GM12878 (cell line): ENCODE measurements at regions of chr11 and their contacts with region 1.

Region 1: DNA sequence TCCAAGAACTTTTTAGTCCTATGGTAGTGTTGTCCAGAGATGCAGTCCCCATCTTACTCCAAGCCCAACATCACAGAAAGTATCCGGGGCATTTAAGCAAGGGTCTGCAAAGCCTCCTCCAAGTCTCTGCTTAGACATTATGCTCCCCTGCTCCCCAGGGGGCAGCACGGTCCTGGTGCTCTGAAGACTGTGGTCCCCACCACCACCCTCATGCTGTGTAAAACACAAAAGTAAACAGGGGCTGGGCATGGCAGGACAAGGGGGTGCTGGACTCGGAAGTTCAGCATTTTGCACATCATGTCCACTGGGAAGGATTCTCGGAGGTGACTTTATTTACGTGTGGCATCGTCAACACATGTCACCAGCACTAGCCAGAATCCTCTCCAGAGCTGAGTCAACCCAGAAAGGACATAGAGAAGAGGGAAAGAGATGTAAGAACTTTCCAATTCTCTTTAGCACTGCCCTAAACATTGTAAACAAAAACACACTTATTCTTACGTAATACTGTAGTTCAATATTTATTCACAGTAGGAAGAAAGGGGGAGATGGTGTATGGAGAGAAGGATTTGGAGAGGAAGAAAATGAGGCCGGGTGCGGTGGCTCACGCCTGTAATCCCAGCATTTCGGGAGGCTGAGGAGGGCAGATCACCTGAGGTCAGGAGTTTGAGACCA is 37.7 kb downstream of the TCIRG1 start:
- DNase-seq: no peak
- ATAC-seq: 0 out of 3 replicates have a peak, but pooled peaks have one; percentile 21
- H3K4me3 ChIP-seq: no peak overlapping the region
- H3K27ac ChIP-seq: no peak overlapping the region
- H3K4me1 ChIP-seq: peaks cover 3% of the 10 kb centered on the region; the same call in 1 of the 2 replicates
- H3K27me3 ChIP-seq: no peaks in the 10 kb centered on the region
- CTCF ChIP-seq: peak; percentile 18 to 31 (median 27); a peak in 4 of 6 replicates
- EP300 ChIP-seq: no peak
- POLR2A ChIP-seq: no peak
- RAD21 ChIP-seq: peak; percentile 39; the same call in 1 of the 2 replicates

Region 2: DNA sequence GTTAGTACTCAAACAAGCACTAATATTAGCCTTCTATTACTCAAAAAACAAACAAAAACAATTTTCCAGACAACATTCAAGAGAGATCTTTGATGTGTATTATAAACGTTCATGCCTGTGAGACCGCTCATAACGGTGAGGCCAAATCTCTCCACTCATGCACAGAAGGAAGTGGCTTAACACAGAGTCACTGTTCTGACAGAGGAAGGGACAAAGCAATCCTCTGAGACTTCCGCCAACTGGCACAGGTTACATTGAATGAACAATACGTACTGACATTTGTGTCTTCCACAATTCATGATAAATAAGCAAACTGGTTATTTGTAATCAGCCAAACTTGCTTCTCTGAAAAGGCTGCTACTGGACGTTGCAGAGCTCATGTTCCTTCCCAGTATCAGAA is 14.2 kb after region 1 on chr11:
- CTCF ChIA-PET with region 1: interaction called, 4 read pairs
- POLR2A ChIA-PET with region 1: interaction called, 4 read pairs
- RAD21 ChIA-PET with region 1: no interaction called
- SMC1A ChIA-PET with region 1: interaction called, 13 read pairs
- in situ Hi-C with region 1: no loop called
- intact Hi-C with region 1: no loop called
- DNase-seq: no peak
- ATAC-seq: peak; percentile 74
- H3K4me3 ChIP-seq: no peak overlapping the region; the same call in 1 of the 2 replicates
- H3K27ac ChIP-seq: peak overlapping the region; percentile 20
- H3K4me1 ChIP-seq: no peaks in the 10 kb centered on the region; the same call in 1 of the 2 replicates
- H3K27me3 ChIP-seq: no peaks in the 10 kb centered on the region
- CTCF ChIP-seq: no peak
- EP300 ChIP-seq: no peak
- POLR2A ChIP-seq: no peak
- RAD21 ChIP-seq: no peak

Region 3: DNA sequence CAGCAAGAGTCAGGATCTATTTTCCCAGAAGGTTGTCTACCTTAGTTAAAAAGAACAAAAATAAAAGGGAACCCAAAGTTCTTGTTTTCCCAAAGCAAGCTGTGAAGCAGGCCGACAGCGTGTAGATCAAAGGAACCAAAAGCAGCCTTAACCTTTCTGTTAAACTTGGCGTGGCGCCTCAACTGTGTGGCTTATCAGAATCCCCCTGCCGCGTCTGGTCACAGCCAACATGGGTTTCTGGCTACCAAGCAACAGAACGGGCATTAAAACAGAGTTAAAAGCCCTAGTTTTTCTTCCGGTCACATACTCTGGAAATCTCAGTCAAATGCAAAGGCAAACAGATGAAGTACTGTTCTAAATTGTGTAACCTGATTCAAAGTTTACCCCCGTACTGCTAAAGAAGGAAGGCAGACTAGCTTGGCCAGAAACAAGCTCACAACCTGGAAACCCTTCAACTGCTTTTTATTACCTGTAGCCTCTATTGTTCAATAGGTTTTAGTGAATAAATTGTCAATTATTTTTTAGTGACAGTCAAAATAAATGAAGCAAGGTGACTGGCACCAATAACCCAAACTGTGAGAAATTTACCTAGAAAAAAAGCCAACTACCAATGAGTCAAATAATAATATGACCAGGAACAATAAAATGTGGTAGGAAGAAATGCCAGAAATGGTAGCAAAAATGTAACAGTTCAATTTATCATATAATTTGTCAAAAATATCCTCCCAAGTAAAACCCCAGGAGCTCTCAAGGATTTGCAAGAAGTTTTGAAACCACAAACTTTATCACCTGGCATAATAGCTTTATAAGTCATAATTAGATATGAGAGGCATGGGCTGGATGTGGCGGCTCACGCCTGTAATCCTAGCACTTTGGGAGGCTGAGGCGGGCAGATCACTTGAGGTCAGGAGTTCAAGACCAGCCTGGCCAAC is 23.2 kb after region 1 on chr11:
- CTCF ChIA-PET with region 1: interaction called, 4 read pairs
- POLR2A ChIA-PET with region 1: no interaction called
- RAD21 ChIA-PET with region 1: interaction called, 3 read pairs
- SMC1A ChIA-PET with region 1: interaction called, 15 read pairs
- in situ Hi-C with region 1: no loop called
- intact Hi-C with region 1: loop called (anchors 2 kb)
- DNase-seq: peak; percentile 52
- ATAC-seq: peak; percentile 96
- H3K4me3 ChIP-seq: peak overlapping the region; percentile 14
- H3K27ac ChIP-seq: peak overlapping the region; percentile 83
- H3K4me1 ChIP-seq: peaks cover 8% of the 10 kb centered on the region
- H3K27me3 ChIP-seq: no peaks in the 10 kb centered on the region
- CTCF ChIP-seq: no peak
- EP300 ChIP-seq: no peak
- POLR2A ChIP-seq: no peak
- RAD21 ChIP-seq: no peak

Region 4: GRCh38 chr11:68271781-68272608 is 195.5 kb after region 1 on chr11 and contains the start of gene C11orf24:
- CTCF ChIA-PET with region 1: no interaction called
- POLR2A ChIA-PET with region 1: no interaction called
- RAD21 ChIA-PET with region 1: no interaction called
- SMC1A ChIA-PET with region 1: no interaction called
- in situ Hi-C with region 1: no loop called
- intact Hi-C with region 1: no loop called
- DNase-seq: peak; percentile 82
- ATAC-seq: peak; percentile 84
- H3K4me3 ChIP-seq: peak within 1 kb of the TSS; percentile 97
- H3K27ac ChIP-seq: peak within 1 kb of the TSS; percentile 95
- H3K4me1 ChIP-seq: peaks cover 29% of the 10 kb centered on the region
- H3K27me3 ChIP-seq: no peaks in the 10 kb centered on the region
- CTCF ChIP-seq: no peak
- EP300 ChIP-seq: no peak
- POLR2A ChIP-seq: peak; percentile 93
- RAD21 ChIP-seq: no peak
- polyA plus RNA-seq, gene C11orf24: 4.3 to 9.9 TPM

Region 5: DNA sequence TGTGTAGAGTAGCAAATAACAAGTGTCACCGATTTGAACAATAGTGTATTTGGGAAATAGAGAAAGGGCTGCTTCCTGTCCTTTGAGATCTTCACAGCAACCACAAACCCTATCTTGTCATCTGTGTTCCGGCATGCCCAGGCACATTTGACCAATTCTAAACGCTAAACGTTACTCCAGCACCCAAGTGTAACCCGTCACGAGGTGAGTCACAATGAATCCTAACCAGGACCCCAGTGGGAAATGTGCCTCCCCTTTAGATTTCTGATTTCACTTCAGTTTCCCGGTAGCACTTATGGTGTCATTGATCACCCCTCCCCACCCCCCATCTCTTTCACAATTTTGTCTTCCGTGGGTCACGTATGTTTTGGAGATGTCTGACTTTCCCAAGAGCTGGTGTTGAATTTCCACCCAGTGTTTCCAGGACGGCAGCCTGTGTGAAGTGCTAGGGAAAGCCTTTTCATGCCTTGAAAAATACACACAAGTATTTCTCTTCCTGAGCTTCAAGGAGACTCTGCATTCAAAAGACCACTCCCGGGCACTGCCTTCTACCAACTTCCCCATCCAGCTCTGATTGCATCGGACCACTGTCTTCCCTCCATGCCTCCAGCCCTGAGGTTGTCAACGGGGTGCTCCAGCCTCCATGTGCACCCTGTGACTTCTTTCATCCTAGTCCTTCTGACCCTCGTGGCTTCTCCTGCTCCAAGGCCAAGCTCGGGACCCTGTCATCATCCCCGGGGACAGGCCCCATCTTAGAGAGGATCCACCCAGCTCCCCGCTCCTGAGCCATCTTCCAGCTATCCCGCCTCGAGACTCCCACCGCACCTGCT is 205.8 kb after region 1 on chr11:
- CTCF ChIA-PET with region 1: no interaction called
- POLR2A ChIA-PET with region 1: no interaction called
- RAD21 ChIA-PET with region 1: no interaction called
- SMC1A ChIA-PET with region 1: no interaction called
- in situ Hi-C with region 1: no loop called
- intact Hi-C with region 1: no loop called
- DNase-seq: peak; percentile 92
- ATAC-seq: peak; percentile 99
- H3K4me3 ChIP-seq: peak overlapping the region; percentile 48; the same call in 1 of the 2 replicates
- H3K27ac ChIP-seq: peak overlapping the region; percentile 61
- H3K4me1 ChIP-seq: peaks cover 16% of the 10 kb centered on the region
- H3K27me3 ChIP-seq: no peaks in the 10 kb centered on the region
- CTCF ChIP-seq: no peak
- EP300 ChIP-seq: peak; percentile 57 to 60; a peak in 2 of 4 replicates
- POLR2A ChIP-seq: no peak
- RAD21 ChIP-seq: no peak